HCT116 (cell line): ENCODE measurements at regions of chr2 and their contacts with region 1.

Region 1: DNA sequence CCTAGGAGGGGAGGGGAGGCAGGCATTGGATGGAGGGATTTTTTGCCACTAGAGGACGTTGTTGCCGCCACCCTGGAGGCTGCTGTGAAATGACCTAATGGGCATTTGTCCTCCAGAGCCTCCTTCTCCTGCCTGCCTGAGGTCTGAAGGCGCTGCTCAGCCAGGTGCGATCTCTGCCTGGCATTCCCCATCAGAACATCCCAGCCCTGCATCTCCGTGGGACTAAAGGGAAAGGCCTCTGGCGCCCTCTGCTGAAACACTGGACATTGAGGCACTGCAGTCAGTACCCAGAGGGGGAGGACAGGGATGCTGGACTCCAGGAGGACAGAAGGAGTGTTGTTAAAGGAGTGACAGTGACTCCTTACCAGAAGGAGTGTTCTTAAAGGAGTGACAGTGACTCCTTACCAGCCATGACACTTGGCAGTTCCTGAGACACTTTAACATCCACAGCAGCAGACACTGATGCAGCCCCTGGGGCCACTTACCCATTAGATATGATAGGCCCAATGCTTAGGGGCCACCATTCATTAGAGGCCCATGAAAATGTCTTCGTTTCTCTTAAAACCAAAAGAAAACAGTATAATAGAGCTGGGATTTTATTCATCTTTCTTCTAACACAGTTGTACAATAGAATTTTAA is 17.0 kb downstream of the THNSL2 start:
- DNase-seq: peak; percentile 61
- ATAC-seq: peak; percentile 87
- H3K4me3 ChIP-seq: no peak overlapping the region
- H3K27ac ChIP-seq: no peak overlapping the region
- H3K4me1 ChIP-seq: peaks cover 0 to 7% of the 10 kb centered on the region in 2 experiments; a peak in 1 of 4 replicates
- H3K27me3 ChIP-seq: peaks cover 6% of the 10 kb centered on the region; the same call in 1 of the 2 replicates
- CTCF ChIP-seq: peak; percentile 81 to 93 (median 83)
- POLR2A ChIP-seq: no peak
- RAD21 ChIP-seq: peak; percentile 87

Region 2: DNA sequence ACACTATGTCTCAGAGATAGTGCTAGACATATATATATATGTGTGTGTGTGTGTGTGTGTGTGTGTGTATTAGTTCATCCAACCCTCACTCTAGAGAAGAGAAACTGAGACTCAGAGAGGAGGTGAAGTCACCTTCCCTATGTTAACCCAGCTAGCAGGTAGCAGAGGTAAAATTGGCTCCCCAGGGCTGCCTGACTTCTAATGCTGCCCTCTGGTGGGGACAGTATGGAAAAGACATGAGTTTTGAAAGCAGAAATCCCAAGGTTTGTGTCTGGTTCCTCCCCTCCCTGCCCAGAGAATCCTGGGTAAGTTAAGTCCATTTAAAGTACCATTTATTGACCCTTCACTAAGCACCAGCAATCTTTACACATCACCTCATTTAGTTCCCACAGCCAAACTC is 120.7 kb after region 1 on chr2:
- CTCF ChIA-PET with region 1: no interaction called
- POLR2A ChIA-PET with region 1: no interaction called
- RAD21 ChIA-PET with region 1: interaction called in 1 of 2 experiments, 3 read pairs
- intact Hi-C with region 1: loop called (anchors 1 kb)
- DNase-seq: peak; percentile 51
- ATAC-seq: peak; percentile 87
- H3K4me3 ChIP-seq: no peak overlapping the region
- H3K27ac ChIP-seq: no peak overlapping the region
- H3K4me1 ChIP-seq: no peaks in the 10 kb centered on the region
- H3K27me3 ChIP-seq: 0 out of 2 replicates have a peak, but pooled peaks cover 3% of the 10 kb centered on the region
- CTCF ChIP-seq: peak; percentile 66 to 71 (median 66)
- POLR2A ChIP-seq: no peak
- RAD21 ChIP-seq: peak; percentile 69

Region 3: GRCh38 chr2:88398180-88398579 is 211.0 kb after region 1 on chr2:
- CTCF ChIA-PET with region 1: interaction called, 3 read pairs
- POLR2A ChIA-PET with region 1: no interaction called
- RAD21 ChIA-PET with region 1: no interaction called
- intact Hi-C with region 1: loop called (anchors 5 kb)
- DNase-seq: no peak
- ATAC-seq: no peak
- H3K4me3 ChIP-seq: no peak overlapping the region
- H3K27ac ChIP-seq: no peak overlapping the region
- H3K4me1 ChIP-seq: peaks cover 0 to 4% of the 10 kb centered on the region in 2 experiments; a peak in 1 of 4 replicates
- H3K27me3 ChIP-seq: no peaks in the 10 kb centered on the region
- CTCF ChIP-seq: no peak
- POLR2A ChIP-seq: no peak
- RAD21 ChIP-seq: no peak

Region 4: GRCh38 chr2:88429929-88430328 is 242.8 kb after region 1 on chr2:
- CTCF ChIA-PET with region 1: no interaction called
- POLR2A ChIA-PET with region 1: no interaction called
- RAD21 ChIA-PET with region 1: no interaction called
- intact Hi-C with region 1: no loop called
- DNase-seq: no peak
- ATAC-seq: no peak
- H3K4me3 ChIP-seq: no peak overlapping the region
- H3K27ac ChIP-seq: no peak overlapping the region
- H3K4me1 ChIP-seq: no peaks in the 10 kb centered on the region
- H3K27me3 ChIP-seq: no peaks in the 10 kb centered on the region
- CTCF ChIP-seq: no peak
- POLR2A ChIP-seq: no peak
- RAD21 ChIP-seq: no peak

Region 5: DNA sequence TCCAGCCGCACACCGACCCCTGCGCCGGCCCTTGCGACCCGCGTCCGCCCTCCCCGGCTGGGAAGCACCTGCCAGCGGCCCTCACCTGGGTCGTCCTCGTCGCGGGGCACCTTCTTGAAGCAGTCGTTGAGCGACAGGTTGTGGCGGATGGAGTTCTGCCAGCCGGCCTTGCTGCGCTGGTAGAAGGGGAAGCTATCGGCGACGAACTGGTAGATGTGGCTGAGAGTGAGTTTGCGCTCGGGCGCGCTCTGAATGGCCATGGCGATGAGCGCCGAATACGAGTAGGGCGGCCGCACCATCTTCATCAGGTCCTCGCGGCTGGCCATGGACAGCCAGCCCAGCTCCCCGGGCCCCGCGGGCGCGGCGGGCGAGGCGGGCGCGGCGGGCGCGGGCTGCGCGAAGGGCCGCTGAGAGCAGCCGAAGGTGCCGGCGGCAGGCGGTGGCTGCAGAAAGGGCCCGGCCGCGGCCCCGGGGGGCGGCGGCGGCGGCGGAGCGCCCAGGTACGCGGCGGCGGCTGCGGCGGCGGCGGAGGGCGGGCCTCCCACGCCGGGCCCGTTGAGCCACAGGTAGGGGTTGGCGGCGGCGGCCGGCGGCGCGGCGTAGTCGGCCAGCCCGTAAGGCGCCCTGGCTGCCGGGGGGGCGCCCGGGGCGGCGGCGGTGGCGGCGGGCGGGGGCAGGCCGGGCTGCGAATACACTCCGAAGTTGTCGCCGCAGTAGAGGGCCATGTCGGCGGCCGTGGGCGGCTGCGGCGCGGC is 264.8 kb after region 1 on chr2:
- CTCF ChIA-PET with region 1: interaction called, 16 read pairs
- POLR2A ChIA-PET with region 1: no interaction called
- RAD21 ChIA-PET with region 1: no interaction called
- intact Hi-C with region 1: loop called (anchors 1 kb)
- DNase-seq: no peak
- ATAC-seq: no peak
- H3K4me3 ChIP-seq: no peak overlapping the region
- H3K27ac ChIP-seq: no peak overlapping the region
- H3K4me1 ChIP-seq: no peaks in the 10 kb centered on the region; a peak in 1 of 4 replicates
- H3K27me3 ChIP-seq: no peaks in the 10 kb centered on the region
- CTCF ChIP-seq: no peak
- POLR2A ChIP-seq: no peak
- RAD21 ChIP-seq: no peak

Region 6: DNA sequence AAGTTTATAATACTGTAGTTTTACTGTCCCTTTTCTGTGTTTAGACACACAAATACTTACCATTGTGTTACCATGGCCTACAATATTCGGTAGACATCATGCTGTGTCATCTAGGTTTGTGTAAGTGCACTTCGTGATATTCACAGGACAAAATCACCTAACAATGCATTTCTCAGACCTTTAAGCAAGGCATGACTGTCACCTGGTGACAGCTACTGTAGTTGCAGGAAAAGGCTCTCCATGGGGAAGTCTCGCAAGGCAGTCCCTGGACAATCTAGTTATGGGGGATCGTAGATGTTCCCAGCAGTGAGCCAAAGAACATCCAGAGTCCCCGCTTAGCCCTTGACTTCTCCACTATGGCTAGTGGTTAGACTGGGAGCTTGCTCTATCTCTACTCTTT is 367.0 kb after region 1 on chr2:
- CTCF ChIA-PET with region 1: interaction called, 5 read pairs
- POLR2A ChIA-PET with region 1: no interaction called
- RAD21 ChIA-PET with region 1: no interaction called
- intact Hi-C with region 1: loop called (anchors 5 kb)
- DNase-seq: no peak
- ATAC-seq: peak; percentile 54; the same call in 1 of the 2 replicates
- H3K4me3 ChIP-seq: no peak overlapping the region
- H3K27ac ChIP-seq: no peak overlapping the region
- H3K4me1 ChIP-seq: no peaks in the 10 kb centered on the region
- H3K27me3 ChIP-seq: no peaks in the 10 kb centered on the region
- CTCF ChIP-seq: peak; percentile 26 to 44 (median 34); a peak in 4 of 6 replicates
- POLR2A ChIP-seq: no peak
- RAD21 ChIP-seq: peak; percentile 61

Region 7: DNA sequence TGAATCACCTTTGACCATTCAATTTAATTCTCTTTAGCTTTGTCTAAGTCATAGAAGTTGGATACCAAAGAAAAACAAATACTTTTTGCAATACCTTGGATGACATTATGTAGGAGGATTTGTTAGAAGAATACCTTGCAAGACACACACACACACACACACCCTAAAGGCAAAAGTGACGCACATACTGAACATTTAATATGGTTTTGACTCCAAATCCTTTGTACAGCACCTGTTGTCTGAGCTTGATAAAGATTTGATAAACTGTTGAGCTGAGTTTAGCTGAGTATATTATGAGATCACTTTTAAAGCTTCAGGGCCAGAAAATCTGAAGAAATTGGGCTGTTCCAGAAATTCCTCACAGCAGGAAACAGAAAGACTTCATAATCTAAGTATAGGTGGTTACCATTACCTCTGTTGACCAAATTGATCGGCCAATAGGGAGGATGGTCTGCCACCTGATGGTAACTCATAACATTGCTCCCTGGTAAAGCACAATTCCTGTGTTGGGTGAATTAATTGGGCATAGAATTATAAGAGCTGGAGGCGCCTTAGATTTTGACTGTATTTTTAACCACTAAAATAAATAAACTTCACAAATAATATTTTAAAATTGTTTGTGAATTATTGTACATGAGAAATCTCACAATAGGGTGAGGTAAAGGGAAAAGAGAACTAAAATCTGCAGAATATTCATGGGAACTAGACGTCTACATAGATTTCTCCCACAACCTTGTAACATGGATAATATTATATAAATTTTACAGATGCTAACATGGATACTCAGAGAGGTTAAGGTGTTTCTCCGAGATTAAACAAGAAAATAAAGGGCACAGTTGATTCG is 482.4 kb after region 1 on chr2:
- CTCF ChIA-PET with region 1: interaction called, 3 read pairs
- POLR2A ChIA-PET with region 1: no interaction called
- RAD21 ChIA-PET with region 1: no interaction called
- intact Hi-C with region 1: loop called (anchors 2 kb)
- DNase-seq: peak; percentile 31
- ATAC-seq: peak; percentile 74
- H3K4me3 ChIP-seq: no peak overlapping the region
- H3K27ac ChIP-seq: no peak overlapping the region
- H3K4me1 ChIP-seq: peaks cover 9 to 11% of the 10 kb centered on the region in 2 experiments
- H3K27me3 ChIP-seq: no peaks in the 10 kb centered on the region
- CTCF ChIP-seq: peak; percentile 67 to 76 (median 69)
- POLR2A ChIP-seq: no peak
- RAD21 ChIP-seq: peak; percentile 83